ENCODE measurements at regions of chr1 and their contacts with region 1.

Region 1: DNA sequence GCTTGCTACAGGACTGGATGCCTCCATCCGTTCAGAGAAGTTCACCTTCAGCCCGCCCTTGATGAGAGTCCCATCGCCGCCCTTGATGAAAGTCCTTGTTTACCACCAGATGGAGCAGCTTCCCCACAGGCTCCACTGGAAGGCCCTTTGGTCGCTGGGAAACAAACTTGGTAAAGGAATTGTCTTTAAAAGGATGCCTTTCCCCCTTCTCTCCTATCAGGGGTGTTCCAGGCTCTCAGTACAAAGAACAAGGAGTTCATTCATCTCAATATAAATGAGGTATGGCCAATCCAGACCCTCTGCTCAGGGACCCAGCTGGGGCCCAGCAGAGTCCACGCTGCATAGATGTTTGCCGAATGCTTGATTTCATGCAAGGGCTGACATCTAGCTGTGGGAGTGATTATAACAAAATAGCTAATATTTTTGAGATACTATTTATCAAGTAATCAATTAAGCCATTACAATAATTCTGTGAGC is 50.8 kb downstream of the CAPN9 start:
- DNase-seq: peak; percentile 49 to 64
- ATAC-seq: peak; percentile 91 to 95
- H3K4me3 ChIP-seq: no peak overlapping the region
- H3K27ac ChIP-seq: no peak overlapping the region
- H3K4me1 ChIP-seq: no peaks in the 10 kb centered on the region
- CTCF ChIP-seq: peak; percentile 81
- EP300 ChIP-seq: no peak
- POLR2A ChIP-seq: no peak
- RAD21 ChIP-seq: peak; percentile 81 to 87

Region 2: DNA sequence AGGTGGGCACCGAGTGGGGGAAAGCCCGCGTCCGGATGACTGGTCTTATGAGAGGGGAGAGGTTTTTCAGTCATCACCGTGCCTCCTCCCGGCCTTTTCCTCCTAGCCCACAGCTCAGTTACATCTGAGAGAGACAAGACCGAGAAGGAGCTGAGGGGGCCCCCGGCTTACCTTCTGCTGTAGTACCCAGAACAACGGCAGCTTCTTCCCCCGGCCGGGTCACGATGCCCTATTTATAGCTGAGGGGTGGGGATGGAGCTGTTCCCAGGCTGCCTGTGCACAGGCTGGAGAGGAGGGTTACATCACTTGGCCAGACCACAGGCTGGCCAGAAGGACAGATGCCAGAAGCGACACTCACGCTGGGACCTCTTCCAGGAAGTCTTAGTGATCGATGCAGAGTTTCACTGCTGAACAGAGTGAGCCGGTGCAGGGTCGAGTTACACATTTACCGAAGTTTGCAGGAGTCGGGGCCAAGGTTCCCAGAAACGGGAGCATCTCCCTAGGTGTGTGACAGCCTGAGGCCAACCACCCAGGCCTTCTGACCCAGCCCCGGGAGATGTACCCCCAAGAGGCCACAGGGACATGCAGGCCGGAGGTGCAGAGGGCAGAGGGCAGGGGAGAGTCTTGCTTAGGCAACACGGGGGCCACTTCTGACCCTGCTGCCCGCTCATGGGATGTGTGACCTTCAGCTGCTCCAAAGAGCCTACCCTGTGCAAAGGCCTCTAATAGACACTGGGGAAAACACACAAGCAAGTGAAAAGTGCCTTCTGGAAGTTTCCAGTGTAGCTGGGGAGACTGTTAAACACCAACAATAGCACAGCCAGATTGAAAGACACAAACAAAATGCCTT is 83.8 kb before region 1 on chr1 and contains the start of gene AGT:
- CTCF ChIA-PET with region 1: no interaction called
- POLR2A ChIA-PET with region 1: no interaction called
- DNase-seq: no peak
- ATAC-seq: peak in 1 of 2 experiments; percentile 39; a peak in 3 of 6 replicates
- H3K4me3 ChIP-seq: no peak within 1 kb of the TSS
- H3K27ac ChIP-seq: no peak within 1 kb of the TSS
- H3K4me1 ChIP-seq: peaks cover 6% of the 10 kb centered on the region; the same call in 2 of the 3 replicates
- CTCF ChIP-seq: no peak
- EP300 ChIP-seq: no peak
- POLR2A ChIP-seq: no peak
- RAD21 ChIP-seq: no peak
- polyA plus RNA-seq, gene AGT: 0.18 and 0.32 TPM in 2 replicates

Region 3: DNA sequence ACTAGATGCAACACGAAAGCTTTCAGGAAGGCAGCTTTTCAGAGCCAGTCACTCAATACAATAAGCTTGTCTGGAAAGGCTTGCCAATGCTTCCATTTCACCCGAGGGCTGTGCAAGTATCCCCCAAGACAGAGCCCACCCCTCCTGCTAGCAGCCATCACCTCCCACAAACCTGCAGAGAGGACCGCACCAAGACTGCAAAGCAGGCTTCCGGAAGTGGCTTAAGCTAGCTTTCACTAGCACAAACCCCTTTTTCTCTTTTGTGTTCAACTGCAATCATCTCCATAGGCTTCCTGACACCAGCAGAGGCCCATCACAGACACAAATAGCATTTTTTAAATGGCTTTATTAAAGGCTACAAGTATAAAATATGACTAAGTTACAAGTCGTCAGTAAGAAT is 38.8 kb after region 1 on chr1:
- CTCF ChIA-PET with region 1: interaction called, 11 read pairs
- POLR2A ChIA-PET with region 1: no interaction called
- DNase-seq: no peak
- ATAC-seq: no peak
- H3K4me3 ChIP-seq: no peak overlapping the region
- H3K27ac ChIP-seq: no peak overlapping the region
- H3K4me1 ChIP-seq: no peaks in the 10 kb centered on the region
- CTCF ChIP-seq: no peak
- EP300 ChIP-seq: no peak
- POLR2A ChIP-seq: no peak
- RAD21 ChIP-seq: no peak

Region 4: GRCh38 chr1:230957580-230957989 is 159.6 kb after region 1 on chr1:
- CTCF ChIA-PET with region 1: no interaction called
- POLR2A ChIA-PET with region 1: no interaction called
- DNase-seq: no peak
- ATAC-seq: no peak
- H3K4me3 ChIP-seq: no peak overlapping the region
- H3K27ac ChIP-seq: no peak overlapping the region
- H3K4me1 ChIP-seq: no peaks in the 10 kb centered on the region
- CTCF ChIP-seq: no peak
- EP300 ChIP-seq: no peak
- POLR2A ChIP-seq: no peak
- RAD21 ChIP-seq: no peak

Measured in A549 (cell line).